ENCODE measurements at regions of chr11 and their contacts with region 1.

Region 1: GRCh38 chr11:118820412-118821357 is 29.7 kb upstream of the DDX6 start:
- DNase-seq: peak; percentile 91
- H3K4me3 ChIP-seq: peak overlapping the region; percentile 61
- H3K27ac ChIP-seq: peak overlapping the region; percentile 80
- H3K4me1 ChIP-seq: peaks cover 61% of the 10 kb centered on the region
- CTCF ChIP-seq: no peak

Region 2: DNA sequence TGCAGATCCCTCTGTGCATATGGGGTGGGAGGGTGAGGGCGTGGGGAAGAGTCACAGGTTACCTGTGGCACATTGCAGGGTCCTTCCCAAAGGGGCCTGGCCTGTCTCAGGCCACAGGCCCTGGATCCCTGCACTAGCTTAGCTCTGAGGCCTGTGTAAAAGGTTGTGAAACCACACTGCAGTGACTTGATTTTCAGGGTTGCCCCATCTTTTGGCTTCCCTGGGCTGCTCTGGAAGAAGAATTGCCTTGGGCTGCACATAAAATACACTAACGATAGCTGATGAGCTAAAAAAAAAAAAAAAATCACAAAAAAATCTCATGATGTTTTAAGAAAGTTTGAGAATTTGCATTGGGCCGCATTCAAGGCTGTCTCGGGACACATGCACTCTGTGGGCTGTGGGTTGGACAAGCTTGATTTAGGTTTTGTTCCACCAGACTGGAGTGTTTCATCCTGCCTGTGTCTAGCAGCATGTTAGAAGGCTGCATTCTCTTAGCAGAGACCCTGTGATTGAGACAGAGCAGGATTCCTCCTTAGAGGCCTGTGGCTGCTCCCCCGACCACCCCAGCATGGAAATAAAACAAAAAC is 105.3 kb before region 1 on chr11:
- CTCF ChIA-PET with region 1: no interaction called
- POLR2A ChIA-PET with region 1: no interaction called
- intact Hi-C with region 1: no loop called
- DNase-seq: peak; percentile 23
- H3K4me3 ChIP-seq: no peak overlapping the region
- H3K27ac ChIP-seq: no peak overlapping the region
- H3K4me1 ChIP-seq: peaks cover 10% of the 10 kb centered on the region
- CTCF ChIP-seq: no peak

Region 3: GRCh38 chr11:118807800-118808778 is 12.6 kb before region 1 on chr11:
- CTCF ChIA-PET with region 1: interaction called, 6 read pairs
- POLR2A ChIA-PET with region 1: interaction called, 21 read pairs
- intact Hi-C with region 1: no loop called
- DNase-seq: no peak
- H3K4me3 ChIP-seq: no peak overlapping the region
- H3K27ac ChIP-seq: no peak overlapping the region
- H3K4me1 ChIP-seq: peaks cover 7% of the 10 kb centered on the region
- CTCF ChIP-seq: no peak

Region 4: DNA sequence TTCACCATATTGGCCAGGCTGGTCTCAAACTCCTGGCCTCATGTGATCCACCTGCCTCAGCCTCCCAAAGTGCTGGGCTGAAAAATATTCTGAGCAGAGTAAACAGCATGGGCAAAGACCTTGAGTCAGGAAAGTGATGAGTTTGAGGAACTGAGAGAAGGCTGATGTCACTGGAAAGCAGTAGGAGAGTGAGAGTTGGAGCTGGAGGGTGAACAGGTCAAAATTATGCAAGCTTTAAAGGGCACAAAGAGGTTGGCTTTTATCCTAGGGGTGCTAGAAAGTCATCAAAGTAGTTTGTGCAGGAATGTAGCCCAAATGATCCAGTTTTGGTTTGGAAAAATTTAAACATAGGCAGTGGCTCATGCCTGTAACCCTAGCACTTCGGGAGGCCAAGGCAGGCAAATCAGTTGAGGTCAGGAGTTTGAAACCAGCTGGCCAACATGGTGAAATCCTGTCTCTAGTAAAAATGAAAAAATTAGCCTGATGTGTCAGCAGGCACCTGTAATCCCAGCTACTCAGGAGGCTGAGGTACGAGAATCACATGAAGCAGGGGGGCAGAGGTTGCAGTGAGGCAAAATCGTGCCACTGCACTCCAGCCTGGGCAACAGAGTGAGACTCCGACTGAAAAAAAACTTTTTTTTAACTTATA is 18.3 kb after region 1 on chr11:
- CTCF ChIA-PET with region 1: no interaction called
- POLR2A ChIA-PET with region 1: interaction called, 7 read pairs
- intact Hi-C with region 1: loop called (anchors 2 kb)
- DNase-seq: peak; percentile 72
- H3K4me3 ChIP-seq: no peak overlapping the region
- H3K27ac ChIP-seq: peak overlapping the region; percentile 57
- H3K4me1 ChIP-seq: peaks cover 53% of the 10 kb centered on the region
- CTCF ChIP-seq: no peak

Region 5: DNA sequence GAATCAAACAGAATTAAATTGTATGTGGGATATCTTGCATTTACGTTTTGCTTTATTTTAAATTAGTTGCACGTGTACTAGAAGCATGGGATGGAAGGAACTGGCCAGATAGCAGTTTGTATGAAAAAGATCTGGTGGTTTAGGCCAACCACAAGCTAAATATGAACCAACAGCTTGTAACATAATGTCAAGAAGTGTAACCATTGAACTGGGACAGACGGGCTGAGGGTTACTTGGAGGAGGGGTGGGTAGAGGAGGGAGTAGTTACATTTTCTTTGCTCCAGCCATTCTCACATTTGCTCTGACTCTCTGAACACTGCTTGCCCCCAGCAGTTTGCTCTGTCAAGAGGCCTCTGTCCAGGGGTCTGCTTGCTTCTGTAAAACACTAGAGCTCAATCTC is 31.3 kb after region 1 on chr11:
- CTCF ChIA-PET with region 1: no interaction called
- POLR2A ChIA-PET with region 1: interaction called, 9 read pairs
- intact Hi-C with region 1: loop called (anchors 1 kb)
- DNase-seq: peak; percentile 86
- H3K4me3 ChIP-seq: peak overlapping the region; percentile 33
- H3K27ac ChIP-seq: peak overlapping the region; percentile 84
- H3K4me1 ChIP-seq: peaks cover 56% of the 10 kb centered on the region
- CTCF ChIP-seq: no peak

Region 6: DNA sequence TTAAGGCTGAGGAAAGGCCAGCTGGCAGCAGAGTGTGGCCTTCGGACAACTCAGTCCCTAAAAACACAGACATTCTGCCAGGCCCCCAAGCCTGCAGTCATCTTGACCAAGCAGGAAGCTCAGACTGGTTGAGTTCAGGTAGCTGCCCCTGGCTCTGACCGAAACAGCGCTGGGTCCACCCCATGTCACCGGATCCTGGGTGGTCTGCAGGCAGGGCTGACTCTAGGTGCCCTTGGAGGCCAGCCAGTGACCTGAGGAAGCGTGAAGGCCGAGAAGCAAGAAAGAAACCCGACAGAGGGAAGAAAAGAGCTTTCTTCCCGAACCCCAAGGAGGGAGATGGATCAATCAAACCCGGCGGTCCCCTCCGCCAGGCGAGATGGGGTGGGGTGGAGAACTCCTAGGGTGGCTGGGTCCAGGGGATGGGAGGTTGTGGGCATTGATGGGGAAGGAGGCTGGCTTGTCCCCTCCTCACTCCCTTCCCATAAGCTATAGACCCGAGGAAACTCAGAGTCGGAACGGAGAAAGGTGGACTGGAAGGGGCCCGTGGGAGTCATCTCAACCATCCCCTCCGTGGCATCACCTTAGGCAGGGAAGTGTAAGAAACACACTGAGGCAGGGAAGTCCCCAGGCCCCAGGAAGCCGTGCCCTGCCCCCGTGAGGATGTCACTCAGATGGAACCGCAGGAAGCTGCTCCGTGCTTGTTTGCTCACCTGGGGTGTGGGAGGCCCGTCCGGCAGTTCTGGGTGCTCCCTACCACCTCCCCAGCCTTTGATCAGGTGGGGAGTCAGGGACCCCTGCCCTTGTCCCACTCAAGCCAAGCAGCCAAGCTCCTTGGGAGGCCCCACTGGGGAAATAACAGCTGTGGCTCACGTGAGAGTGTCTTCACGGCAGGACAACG is 74.7 kb after region 1 on chr11:
- CTCF ChIA-PET with region 1: no interaction called
- POLR2A ChIA-PET with region 1: interaction called, 14 read pairs
- intact Hi-C with region 1: loop called (anchors 2 kb)
- DNase-seq: peak; percentile 90
- H3K4me3 ChIP-seq: peak overlapping the region; percentile 57
- H3K27ac ChIP-seq: peak overlapping the region; percentile 91
- H3K4me1 ChIP-seq: peaks cover 83% of the 10 kb centered on the region
- CTCF ChIP-seq: peak; percentile 45

Region 7: GRCh38 chr11:119144825-119145486 is 324.3 kb after region 1 on chr11:
- CTCF ChIA-PET with region 1: no interaction called
- POLR2A ChIA-PET with region 1: no interaction called
- intact Hi-C with region 1: no loop called
- DNase-seq: peak; percentile 67
- H3K4me3 ChIP-seq: no peak overlapping the region
- H3K27ac ChIP-seq: no peak overlapping the region
- H3K4me1 ChIP-seq: peaks cover 17% of the 10 kb centered on the region
- CTCF ChIP-seq: peak; percentile 55

Measured in OCI-LY7 (cell line).